PC-3 (cell line): ENCODE measurements at regions of chrX and their contacts with region 1.

Region 1: DNA sequence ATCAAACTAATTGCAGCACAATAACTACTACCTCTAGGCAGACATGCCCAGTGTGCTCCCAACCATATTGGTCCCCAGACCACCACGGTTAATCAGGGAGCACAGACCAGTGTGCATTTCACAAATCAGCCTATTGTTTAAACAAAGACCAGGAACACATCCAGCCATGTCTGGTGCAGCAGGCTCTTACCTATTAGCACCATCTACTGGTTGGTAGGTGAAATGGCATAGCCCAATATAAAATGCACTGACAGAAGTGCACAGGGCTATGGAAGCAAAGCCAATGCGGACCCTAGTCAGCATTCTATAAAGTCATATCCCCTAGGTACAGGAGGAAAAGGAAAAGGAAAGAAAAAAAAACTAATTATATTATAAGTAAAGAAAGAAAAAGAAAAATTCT is 15.5 kb upstream of the CYLC1 start:
- DNase-seq: peak; percentile 50
- ATAC-seq: peak; percentile 81
- H3K4me3 ChIP-seq: no peak overlapping the region
- H3K27ac ChIP-seq: no peak overlapping the region
- H3K4me1 ChIP-seq: no peaks in the 10 kb centered on the region
- H3K27me3 ChIP-seq: no peaks in the 10 kb centered on the region
- CTCF ChIP-seq: peak; percentile 70

Region 2: DNA sequence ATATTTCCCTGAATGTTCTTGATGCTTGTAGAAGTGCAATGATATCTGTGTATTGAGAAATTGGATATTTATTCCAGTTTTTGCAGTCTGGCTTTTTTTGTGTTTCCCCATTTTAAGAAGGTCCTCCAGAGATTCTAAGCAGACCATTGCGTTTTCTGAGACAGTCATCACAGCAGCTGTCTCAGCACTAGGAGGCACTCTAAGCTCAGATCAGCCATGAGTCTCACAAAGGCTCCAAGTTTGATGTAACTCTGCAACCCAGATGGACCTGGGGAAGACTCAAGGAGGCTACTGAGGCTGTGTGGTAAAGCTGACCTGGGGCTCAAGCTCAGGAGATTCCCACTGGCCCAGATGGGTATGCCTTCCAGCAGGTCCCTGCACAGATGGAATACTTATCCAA is 73.7 kb before region 1 on chrX:
- CTCF ChIA-PET with region 1: no interaction called
- POLR2A ChIA-PET with region 1: no interaction called
- intact Hi-C with region 1: loop called (anchors 1 kb)
- DNase-seq: peak; percentile 13
- ATAC-seq: peak; percentile 69
- H3K4me3 ChIP-seq: no peak overlapping the region
- H3K27ac ChIP-seq: no peak overlapping the region
- H3K4me1 ChIP-seq: no peaks in the 10 kb centered on the region
- H3K27me3 ChIP-seq: no peaks in the 10 kb centered on the region
- CTCF ChIP-seq: peak; percentile 40

Region 3: DNA sequence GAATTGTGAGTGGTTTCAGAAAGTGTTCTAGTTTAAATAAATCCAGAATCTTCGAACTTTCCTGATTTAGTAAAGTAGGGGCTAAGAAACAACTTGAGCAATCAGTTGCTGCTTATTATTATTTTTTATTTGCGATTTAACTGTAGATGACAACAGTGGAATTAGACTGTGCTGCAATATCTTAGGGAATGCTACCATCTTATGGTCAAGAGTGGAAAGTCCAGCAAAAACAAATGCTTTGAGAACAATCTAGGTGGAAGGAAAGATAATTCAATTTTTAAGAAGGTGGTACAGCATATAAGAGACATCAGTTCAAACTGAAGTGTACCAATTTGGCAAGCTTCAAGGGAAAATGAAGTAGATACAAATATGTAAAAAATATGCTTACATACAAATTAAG is 88.8 kb after region 1 on chrX:
- CTCF ChIA-PET with region 1: no interaction called
- POLR2A ChIA-PET with region 1: no interaction called
- intact Hi-C with region 1: loop called (anchors 5 kb)
- DNase-seq: peak; percentile 42
- ATAC-seq: peak; percentile 74
- H3K4me3 ChIP-seq: no peak overlapping the region
- H3K27ac ChIP-seq: no peak overlapping the region
- H3K4me1 ChIP-seq: no peaks in the 10 kb centered on the region
- H3K27me3 ChIP-seq: no peaks in the 10 kb centered on the region
- CTCF ChIP-seq: peak; percentile 52; the same call in 1 of the 2 replicates